Spleen (tissue), 13 donors: ENCODE measurements at regions of chr19 and their contacts with region 1.

Region 1: GRCh38 chr19:18571564-18572300 is at the start of gene UBA52:
- DNase-seq: peak; percentile 99
- H3K4me3 ChIP-seq: peak within 1 kb of the TSS; percentile 67 to 98 (median 90)
- H3K27ac ChIP-seq: peak within 1 kb of the TSS; percentile 88 to 98 (median 95)
- H3K4me1 ChIP-seq: peaks cover 9 to 40% (median 25%) of the 10 kb centered on the region in 6 donors
- H3K27me3 ChIP-seq: no peaks in the 10 kb centered on the region
- CTCF ChIP-seq: peak in 3 of 11 experiments; percentile 31 to 36 (median 32)
- POLR2A ChIP-seq: peak in 1 of 3 donors; percentile 61
- total RNA-seq, gene UBA52: 650 to 1,362 (median 985) TPM

Region 2: DNA sequence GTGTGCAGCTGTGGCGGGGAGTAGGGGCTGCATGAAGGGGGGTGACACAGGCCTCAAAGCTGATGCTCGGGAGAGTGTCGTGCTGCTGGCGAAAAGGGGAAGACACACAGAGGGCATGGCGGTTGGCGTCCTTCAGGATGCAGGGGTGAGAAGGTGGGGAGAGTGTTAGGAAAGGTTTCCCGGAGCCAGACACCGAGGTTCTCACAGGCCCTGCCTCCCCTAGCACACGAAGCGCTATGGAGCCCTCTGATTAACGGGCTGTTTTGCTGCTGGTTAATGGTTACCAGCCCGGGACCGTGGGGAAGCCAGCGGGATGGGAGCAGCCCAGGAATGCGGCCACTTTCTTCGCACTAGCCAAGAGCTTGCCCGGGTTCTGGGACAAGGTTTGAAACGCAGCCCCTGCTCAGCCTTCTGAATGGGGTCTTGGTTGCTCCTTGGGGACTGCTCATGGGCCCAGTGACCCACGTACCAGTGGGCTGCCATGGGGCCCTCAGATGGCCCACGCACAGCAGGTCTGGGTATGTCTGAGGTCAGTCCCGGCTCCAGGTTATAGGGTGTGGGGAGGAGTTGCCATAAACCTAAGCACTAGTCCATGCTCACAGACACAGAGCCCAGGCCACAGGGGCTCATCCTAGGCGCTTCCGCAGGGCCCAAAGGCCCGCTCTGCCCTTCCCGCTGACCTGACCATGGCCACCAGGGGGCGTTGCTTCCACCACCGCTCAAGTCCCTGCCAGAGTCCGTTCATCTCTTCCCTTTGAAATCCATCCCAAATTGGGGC is 102.5 kb before region 1 on chr19:
- intact Hi-C with region 1: loop called (anchors 10 kb)
- DNase-seq: peak; percentile 89
- H3K4me3 ChIP-seq: no peak overlapping the region
- H3K27ac ChIP-seq: peak overlapping the region in 4 of 8 donors; percentile 14 to 63 (median 22)
- H3K4me1 ChIP-seq: peaks cover 4 to 94% (median 41%) of the 10 kb centered on the region in 6 donors
- H3K27me3 ChIP-seq: no peaks in the 10 kb centered on the region
- CTCF ChIP-seq: peak; percentile 61 to 90 (median 79)
- POLR2A ChIP-seq: no peak

Region 3: DNA sequence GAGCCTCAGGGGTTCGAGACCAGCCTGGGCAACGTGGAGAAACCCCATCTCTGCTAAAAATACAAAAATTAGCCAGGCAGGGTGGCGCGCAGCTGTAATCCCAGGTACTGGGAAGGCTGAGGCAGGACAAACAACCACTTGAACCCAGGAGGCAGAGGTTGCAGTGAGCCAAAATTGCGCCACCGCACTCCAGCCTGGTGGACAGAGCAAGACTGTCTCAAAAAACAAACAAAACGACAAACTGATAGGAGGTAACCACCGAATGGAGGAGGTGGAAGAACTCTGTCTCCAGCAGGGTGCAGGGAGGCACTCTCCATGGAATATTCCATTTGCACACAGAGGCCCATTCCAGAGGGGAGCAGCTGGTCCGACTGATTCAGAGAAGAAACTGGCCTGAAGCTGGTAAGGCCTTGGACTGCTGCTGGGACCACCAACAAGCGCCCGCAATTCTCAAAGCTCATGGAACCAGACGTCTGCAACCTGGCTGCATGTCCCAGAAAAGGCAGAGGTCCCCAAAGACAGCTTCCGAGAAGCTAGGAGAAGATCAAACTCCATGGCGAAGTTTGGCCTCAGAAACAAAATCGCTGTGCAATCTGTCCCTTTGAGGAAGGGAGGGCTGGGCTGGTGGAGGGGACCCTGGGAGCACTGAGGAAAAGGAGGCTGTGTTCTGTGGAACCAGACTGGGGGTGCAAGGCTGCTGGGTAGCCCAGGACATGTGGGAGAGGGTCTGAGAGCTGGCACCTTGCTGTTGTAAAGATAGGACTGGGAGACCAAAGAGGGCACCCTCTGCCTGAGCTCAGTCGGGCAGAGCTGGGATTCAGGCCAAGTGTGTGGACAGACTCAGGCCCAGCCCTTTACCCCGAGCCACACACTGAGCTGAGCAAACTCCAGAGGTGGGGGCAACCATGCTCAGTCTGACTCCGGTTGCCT is 527.2 kb after region 1 on chr19:
- intact Hi-C with region 1: no loop called
- DNase-seq: no peak
- H3K4me3 ChIP-seq: no peak overlapping the region
- H3K27ac ChIP-seq: no peak overlapping the region
- H3K4me1 ChIP-seq: no peaks in the 10 kb centered on the region
- H3K27me3 ChIP-seq: no peaks in the 10 kb centered on the region
- CTCF ChIP-seq: no peak
- POLR2A ChIP-seq: no peak